Testis (tissue), 5 donors: ENCODE measurements at regions of chr16 and their contacts with region 1.

Region 1: GRCh38 chr16:19086322-19087199 is 19.1 kb downstream of the COQ7 start:
- DNase-seq: peak; percentile 88
- H3K4me3 ChIP-seq: peak overlapping the region; percentile 19 to 43
- H3K27ac ChIP-seq: no peak overlapping the region
- H3K4me1 ChIP-seq: peaks cover 8% of the 10 kb centered on the region
- H3K27me3 ChIP-seq: no peaks in the 10 kb centered on the region
- CTCF ChIP-seq: peak; percentile 84 to 96 (median 93)
- POLR2A ChIP-seq: no peak

Region 2: GRCh38 chr16:19001788-19002187 is 84.8 kb before region 1 on chr16:
- intact Hi-C with region 1: no loop called
- DNase-seq: no peak
- H3K4me3 ChIP-seq: no peak overlapping the region
- H3K27ac ChIP-seq: no peak overlapping the region
- H3K4me1 ChIP-seq: no peaks in the 10 kb centered on the region
- H3K27me3 ChIP-seq: no peaks in the 10 kb centered on the region
- CTCF ChIP-seq: no peak
- POLR2A ChIP-seq: no peak

Region 3: GRCh38 chr16:19130852-19131810 is 44.6 kb after region 1 on chr16:
- intact Hi-C with region 1: no loop called
- DNase-seq: peak; percentile 31
- H3K4me3 ChIP-seq: no peak overlapping the region
- H3K27ac ChIP-seq: peak overlapping the region; percentile 41 to 65
- H3K4me1 ChIP-seq: no peaks in the 10 kb centered on the region
- H3K27me3 ChIP-seq: no peaks in the 10 kb centered on the region
- CTCF ChIP-seq: no peak
- POLR2A ChIP-seq: no peak

Region 4: GRCh38 chr16:19167710-19168370 is 81.3 kb after region 1 on chr16 and contains the start of gene SYT17:
- intact Hi-C with region 1: loop called (anchors 10 kb)
- DNase-seq: peak; percentile 58
- H3K4me3 ChIP-seq: peak within 1 kb of the TSS; percentile 42 to 63
- H3K27ac ChIP-seq: no peak within 1 kb of the TSS
- H3K4me1 ChIP-seq: peaks cover 2% of the 10 kb centered on the region
- H3K27me3 ChIP-seq: no peaks in the 10 kb centered on the region
- CTCF ChIP-seq: peak; percentile 12 to 58 (median 36)
- POLR2A ChIP-seq: no peak
- total RNA-seq, gene SYT17: 3.1 to 3.7 TPM

Region 5: GRCh38 chr16:19307587-19308241 is 221.2 kb after region 1 on chr16:
- intact Hi-C with region 1: no loop called
- DNase-seq: no peak
- H3K4me3 ChIP-seq: no peak overlapping the region
- H3K27ac ChIP-seq: no peak overlapping the region
- H3K4me1 ChIP-seq: no peaks in the 10 kb centered on the region
- H3K27me3 ChIP-seq: no peaks in the 10 kb centered on the region
- CTCF ChIP-seq: no peak
- POLR2A ChIP-seq: no peak

Region 6: DNA sequence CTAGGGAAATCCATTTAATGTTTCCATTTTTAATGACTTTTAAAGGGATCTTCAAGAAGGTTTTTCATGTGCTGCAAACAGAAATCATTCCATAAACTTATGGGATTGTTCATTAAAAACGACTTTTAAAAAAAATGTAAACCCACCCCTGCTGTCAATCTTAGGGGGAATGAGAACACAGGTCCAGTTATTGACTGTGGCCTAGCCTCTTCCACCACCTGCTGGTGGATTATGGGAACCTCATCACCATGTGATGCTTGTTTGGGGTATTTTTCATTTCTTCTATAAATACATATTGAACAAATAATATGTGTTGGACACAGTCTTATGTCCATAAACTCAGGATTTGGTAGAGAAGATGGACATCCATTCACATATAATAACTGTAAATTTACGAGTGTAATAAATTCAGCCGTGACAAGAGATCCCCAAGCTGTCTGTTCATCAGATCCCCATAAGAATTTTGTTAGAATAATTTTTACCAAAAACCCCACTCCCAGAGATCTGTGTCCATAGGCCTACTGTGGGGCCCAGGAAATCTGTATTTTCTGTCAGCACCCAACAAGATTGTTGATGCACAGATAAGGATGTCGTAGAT is 289.1 kb after region 1 on chr16:
- intact Hi-C with region 1: loop called (anchors 5 kb)
- DNase-seq: peak; percentile 52
- H3K4me3 ChIP-seq: no peak overlapping the region
- H3K27ac ChIP-seq: no peak overlapping the region
- H3K4me1 ChIP-seq: no peaks in the 10 kb centered on the region
- H3K27me3 ChIP-seq: no peaks in the 10 kb centered on the region
- CTCF ChIP-seq: peak; percentile 81 to 88 (median 87)
- POLR2A ChIP-seq: no peak